Endothelial cell of umbilical vein (primary cell): ENCODE measurements at regions of chr7 and their contacts with region 1.

Region 1: GRCh38 chr7:116327752-116328151 is 117.4 kb downstream of the TES start:
- DNase-seq: peak; percentile 97
- H3K4me3 ChIP-seq: peak overlapping the region; percentile 43 to 99 (median 98)
- H3K27ac ChIP-seq: peak overlapping the region; percentile 97
- H3K4me1 ChIP-seq: peaks cover 48% of the 10 kb centered on the region
- H3K27me3 ChIP-seq: no peaks in the 10 kb centered on the region
- CTCF ChIP-seq: no peak
- POLR2A ChIP-seq: peak; percentile 97

Region 2: DNA sequence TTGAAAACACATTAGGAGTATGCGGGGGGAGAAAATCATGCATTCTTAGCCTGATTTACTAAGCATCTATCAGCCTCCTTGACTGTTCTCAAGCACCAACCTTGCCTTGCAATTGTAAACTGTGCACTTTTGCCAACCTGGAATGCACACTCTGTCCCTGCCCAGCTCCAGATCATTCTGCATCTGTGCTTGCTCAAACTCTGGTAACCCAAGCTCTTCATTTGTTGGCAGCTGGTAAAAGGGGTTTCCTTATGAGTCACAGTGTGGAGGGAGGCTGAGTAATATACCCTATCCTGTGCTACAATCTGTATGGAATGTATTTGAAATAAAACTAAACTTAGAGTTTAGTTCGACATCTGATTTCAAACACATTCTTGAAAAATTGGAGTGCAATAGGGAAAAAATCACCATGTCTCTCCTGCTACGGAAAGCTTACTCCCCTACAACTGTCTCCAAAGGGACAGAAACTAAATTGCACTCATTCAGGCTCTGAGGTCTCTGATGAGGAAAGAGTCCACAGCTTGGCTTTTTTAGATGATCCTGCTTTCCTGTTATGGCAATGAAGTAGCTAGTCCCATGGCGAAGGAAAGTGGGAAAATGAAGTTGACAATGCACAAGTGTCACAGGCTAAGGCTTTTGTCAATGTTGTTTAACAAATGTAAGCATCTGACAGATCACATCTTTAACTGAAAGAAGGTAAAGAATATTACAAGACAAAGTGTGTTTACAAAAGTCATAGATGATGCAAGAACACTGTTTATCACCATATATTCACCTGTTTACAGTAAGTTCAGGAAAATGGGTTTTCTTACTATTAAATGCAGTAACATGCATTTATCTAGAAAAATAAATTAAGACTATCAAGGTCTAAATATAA is 55.6 kb before region 1 on chr7:
- CTCF ChIA-PET with region 1: interaction called, 5 read pairs
- POLR2A ChIA-PET with region 1: interaction called, 4 read pairs
- dilution Hi-C with region 1: no loop called
- intact Hi-C with region 1: loop called (anchors 1 kb)
- DNase-seq: peak; percentile 94
- H3K4me3 ChIP-seq: peak overlapping the region in 1 of 3 experiments; percentile 48
- H3K27ac ChIP-seq: peak overlapping the region; percentile 90
- H3K4me1 ChIP-seq: peaks cover 57% of the 10 kb centered on the region
- H3K27me3 ChIP-seq: no peaks in the 10 kb centered on the region
- CTCF ChIP-seq: no peak
- POLR2A ChIP-seq: no peak

Region 3: DNA sequence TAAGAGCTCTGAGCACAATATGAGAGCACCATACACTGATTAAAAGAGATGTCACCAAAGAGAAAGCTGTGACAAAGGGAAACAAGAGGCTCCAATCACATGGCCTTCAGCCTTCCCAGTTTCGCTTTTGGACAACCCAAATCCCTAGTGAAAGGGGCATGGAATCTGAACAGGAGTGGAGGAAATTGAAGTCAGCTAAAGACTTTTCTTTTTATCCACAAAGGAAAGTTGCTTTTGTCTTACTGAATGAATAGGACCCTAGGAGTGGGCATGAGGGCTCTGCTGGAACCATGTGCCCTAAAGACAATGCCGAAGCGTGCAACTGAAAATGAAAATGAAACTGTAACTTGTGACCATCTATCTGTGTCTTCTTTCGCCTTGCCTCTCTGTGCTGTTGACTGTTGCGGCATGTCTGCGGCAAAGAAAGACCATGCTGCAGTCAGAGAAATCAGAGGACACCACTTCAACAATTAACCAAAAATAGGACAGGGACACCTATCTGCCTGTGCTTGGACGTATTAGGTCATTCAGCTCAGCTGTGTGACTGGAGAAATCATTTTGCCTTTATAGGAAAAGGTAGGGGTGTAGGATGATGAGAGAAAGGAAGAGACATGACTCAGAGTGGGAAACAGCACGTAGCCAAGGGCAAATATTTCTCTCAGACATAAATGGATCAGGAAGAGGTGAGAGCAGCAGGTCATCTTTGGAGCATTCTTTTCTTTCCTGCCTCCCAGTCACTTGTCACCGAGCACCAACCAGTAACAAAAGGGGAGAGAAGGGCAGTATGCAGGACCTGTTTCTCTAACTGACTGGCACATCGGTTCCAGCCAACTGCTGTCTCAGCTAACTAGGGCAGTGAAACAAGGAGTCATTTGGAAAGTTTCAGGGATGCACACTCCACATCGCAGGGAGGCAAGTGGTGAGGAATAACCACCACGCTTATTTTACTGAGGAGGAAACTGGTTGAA is 184.1 kb after region 1 on chr7:
- CTCF ChIA-PET with region 1: no interaction called
- POLR2A ChIA-PET with region 1: no interaction called
- dilution Hi-C with region 1: loop called (anchors 25 kb)
- intact Hi-C with region 1: loop called (anchors 1 kb)
- DNase-seq: peak; percentile 96
- H3K4me3 ChIP-seq: peak overlapping the region; percentile 32 to 70 (median 45)
- H3K27ac ChIP-seq: peak overlapping the region; percentile 96
- H3K4me1 ChIP-seq: peaks cover 54% of the 10 kb centered on the region
- H3K27me3 ChIP-seq: no peaks in the 10 kb centered on the region
- CTCF ChIP-seq: no peak
- POLR2A ChIP-seq: peak; percentile 76